Body of pancreas (tissue), 4 donors: ENCODE measurements at regions of chr18 and their contacts with region 1.

Region 1: GRCh38 chr18:35227254-35227653 is 13.6 kb upstream of the ZNF397 start:
- DNase-seq: no peak
- ATAC-seq: no peak
- H3K4me3 ChIP-seq: no peak overlapping the region
- H3K27ac ChIP-seq: no peak overlapping the region
- H3K4me1 ChIP-seq: no peaks in the 10 kb centered on the region
- H3K27me3 ChIP-seq: no peaks in the 10 kb centered on the region
- CTCF ChIP-seq: no peak
- POLR2A ChIP-seq: no peak

Region 2: DNA sequence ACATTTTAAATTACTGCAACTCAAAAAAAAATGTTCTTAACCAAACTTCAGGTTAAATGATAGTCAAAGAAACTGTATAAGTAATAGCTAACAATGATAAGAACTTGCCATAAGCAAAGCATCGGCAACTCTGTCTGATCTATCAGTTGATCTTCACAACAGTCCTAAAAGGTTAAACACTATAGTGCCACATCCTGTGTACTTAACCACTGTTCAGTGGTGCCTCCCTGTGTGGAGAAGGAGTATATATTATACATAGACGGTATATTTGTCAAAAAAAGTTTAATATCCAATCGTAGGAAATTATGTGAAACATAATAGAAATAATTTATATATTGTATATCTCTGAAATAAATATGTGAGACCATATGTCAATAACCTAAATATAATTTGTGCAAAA is 504.1 kb before region 1 on chr18:
- intact Hi-C with region 1: no loop called
- DNase-seq: no peak
- ATAC-seq: no peak
- H3K4me3 ChIP-seq: no peak overlapping the region
- H3K27ac ChIP-seq: no peak overlapping the region
- H3K4me1 ChIP-seq: no peaks in the 10 kb centered on the region
- H3K27me3 ChIP-seq: no peaks in the 10 kb centered on the region
- CTCF ChIP-seq: no peak
- POLR2A ChIP-seq: no peak

Region 3: GRCh38 chr18:35352778-35353177 is 125.5 kb after region 1 on chr18:
- intact Hi-C with region 1: loop called (anchors 5 kb)
- DNase-seq: no peak
- ATAC-seq: no peak
- H3K4me3 ChIP-seq: no peak overlapping the region
- H3K27ac ChIP-seq: no peak overlapping the region
- H3K4me1 ChIP-seq: peaks cover 3% of the 10 kb centered on the region
- H3K27me3 ChIP-seq: no peaks in the 10 kb centered on the region
- CTCF ChIP-seq: no peak
- POLR2A ChIP-seq: no peak